Psoas muscle (tissue), 8 donors: ENCODE measurements at regions of chr14 and their contacts with region 1.

Region 1: DNA sequence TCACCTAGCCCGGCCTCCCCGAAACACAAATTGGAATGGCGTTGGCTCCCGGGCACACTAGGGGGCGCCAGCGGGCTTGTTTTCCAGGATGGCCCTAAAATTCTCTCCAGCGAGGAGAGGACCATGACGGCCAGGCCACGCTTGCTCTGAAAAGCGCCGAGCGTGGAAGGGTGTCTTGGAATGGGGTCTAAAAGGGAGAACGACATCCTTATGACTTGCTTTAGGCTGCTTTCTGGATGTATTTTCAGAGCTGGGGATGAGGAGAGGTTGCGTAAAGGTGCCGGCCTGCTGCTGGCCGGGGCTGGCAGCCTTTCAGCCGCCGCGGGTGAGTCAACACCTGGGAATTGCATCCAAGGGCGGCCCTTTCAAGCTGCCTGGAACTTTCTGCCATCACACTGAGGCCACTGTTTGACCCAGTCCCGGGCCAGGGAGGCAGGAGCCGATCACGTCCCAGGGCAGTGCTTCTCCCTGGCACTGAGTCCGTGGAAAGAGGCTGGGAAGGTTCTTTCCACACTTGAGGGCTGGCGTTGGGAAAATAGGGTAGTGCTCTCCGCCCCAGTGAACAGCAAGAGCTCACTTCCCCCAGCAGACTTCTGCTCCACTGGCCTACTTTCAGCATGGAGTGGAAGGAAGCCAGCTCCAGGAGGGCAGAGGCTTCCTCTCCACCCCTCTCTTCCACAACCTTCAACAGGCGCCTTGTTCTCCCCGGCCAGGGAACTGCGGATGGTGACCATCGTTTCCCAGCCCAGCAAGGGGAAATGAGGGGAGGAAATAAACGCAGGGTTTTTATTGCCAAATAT is 216.2 kb downstream of the TTC8 start:
- DNase-seq: peak; percentile 91 to 94
- ATAC-seq: peak; percentile 98 to 99 (median 98)
- H3K4me3 ChIP-seq: peak overlapping the region; percentile 62
- H3K27ac ChIP-seq: peak overlapping the region; percentile 87
- H3K4me1 ChIP-seq: peaks cover 10% of the 10 kb centered on the region
- H3K27me3 ChIP-seq: no peaks in the 10 kb centered on the region
- CTCF ChIP-seq: peak; percentile 93

Region 2: GRCh38 chr14:89165189-89166181 is 124.8 kb after region 1 on chr14:
- intact Hi-C with region 1: loop called (anchors 5 to 10 kb)
- DNase-seq: no peak
- ATAC-seq: peak; percentile 49 to 70 (median 58)
- H3K4me3 ChIP-seq: peak overlapping the region; percentile 52
- H3K27ac ChIP-seq: peak overlapping the region; percentile 64
- H3K4me1 ChIP-seq: peaks cover 30% of the 10 kb centered on the region
- H3K27me3 ChIP-seq: no peaks in the 10 kb centered on the region
- CTCF ChIP-seq: no peak